ENCODE measurements at regions of chr3 and their contacts with region 1.

Region 1: GRCh38 chr3:52231502-52232293 is 6.3 kb upstream of the TLR9 start:
- DNase-seq: peak; percentile 89
- ATAC-seq: peak; percentile 88
- H3K4me3 Mint-ChIP-seq: peak overlapping the region; percentile 38
- H3K27ac Mint-ChIP-seq: peak overlapping the region; percentile 77
- H3K4me1 Mint-ChIP-seq: peaks cover 62% of the 10 kb centered on the region
- H3K27me3 Mint-ChIP-seq: no peaks in the 10 kb centered on the region

Region 2: DNA sequence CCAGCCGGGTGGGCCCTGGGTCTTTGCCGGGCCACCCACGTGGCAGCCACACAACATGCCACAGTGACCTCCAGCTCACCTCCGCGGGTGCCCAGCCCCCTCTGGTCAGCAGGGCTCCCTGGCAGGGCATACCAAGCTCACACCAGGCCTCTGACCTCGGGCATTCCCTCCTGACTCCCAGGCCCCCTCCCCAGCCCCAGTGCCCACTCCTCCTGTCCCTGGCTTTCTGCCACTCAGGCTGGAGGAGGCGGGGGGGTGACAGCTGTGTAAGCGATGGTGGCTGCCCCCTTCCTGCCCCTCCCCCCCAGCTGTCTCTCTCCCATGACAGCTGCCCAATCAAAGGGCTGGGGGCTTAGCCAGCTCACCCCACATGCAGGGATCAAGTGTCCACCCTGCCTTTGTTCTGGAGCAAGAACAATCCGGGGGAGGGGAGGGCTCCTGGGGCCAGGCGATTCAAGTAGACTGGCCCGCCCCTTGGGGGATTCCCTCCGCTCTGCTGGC is 267.7 kb before region 1 on chr3:
- CTCF ChIA-PET with region 1: no interaction called
- POLR2A ChIA-PET with region 1: no interaction called
- DNase-seq: no peak
- ATAC-seq: no peak
- H3K4me3 Mint-ChIP-seq: no peak overlapping the region
- H3K27ac Mint-ChIP-seq: no peak overlapping the region
- H3K4me1 Mint-ChIP-seq: peaks cover 12% of the 10 kb centered on the region
- H3K27me3 Mint-ChIP-seq: peaks cover 12% of the 10 kb centered on the region

Region 3: DNA sequence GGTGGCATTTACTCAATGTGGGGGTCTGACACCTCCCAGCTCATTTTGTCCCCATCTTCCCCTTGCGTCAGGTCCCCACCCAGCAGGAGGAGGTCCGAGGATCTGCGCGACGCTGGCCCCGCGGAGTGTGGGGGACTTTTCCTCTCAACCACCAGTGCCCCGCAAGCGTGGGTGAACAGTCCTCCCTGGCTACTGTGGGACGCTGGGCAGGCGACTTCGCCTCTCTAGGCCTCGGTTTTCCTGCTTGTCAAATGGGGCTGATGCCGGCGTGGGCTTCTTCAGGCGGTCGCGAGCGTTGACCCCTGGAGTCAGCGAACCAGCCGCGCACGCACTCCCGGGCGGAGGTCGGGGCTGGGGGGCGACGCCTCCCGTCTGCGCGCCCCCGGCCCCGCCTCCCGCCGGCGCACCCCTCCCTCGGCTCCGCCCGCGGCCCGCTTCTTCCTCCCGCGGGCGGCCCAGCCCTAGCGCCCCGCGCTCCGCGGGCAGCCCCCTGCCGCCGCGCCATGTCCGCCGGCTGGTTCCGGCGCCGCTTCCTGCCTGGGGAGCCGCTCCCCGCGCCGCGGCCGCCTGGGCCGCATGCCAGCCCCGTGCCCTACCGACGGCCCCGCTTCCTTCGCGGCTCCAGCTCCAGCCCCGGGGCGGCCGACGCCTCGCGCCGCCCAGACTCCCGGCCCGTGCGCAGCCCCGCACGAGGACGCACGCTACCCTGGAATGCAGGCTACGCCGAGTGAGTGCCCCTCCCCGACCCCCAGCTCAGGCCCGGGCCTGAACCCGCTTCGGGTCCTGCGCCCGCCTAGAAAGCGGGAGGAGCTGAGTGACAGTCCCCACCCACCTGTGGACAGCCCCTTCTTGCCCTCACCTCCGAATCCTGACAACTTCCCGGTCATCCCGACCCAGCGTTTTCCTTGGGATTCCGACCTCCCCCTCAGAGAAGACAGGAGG is 13.9 kb after region 1 on chr3 and contains the start of gene PPM1M:
- CTCF ChIA-PET with region 1: interaction called, 51 read pairs
- POLR2A ChIA-PET with region 1: interaction called, 9 read pairs
- DNase-seq: peak; percentile 68
- ATAC-seq: peak; percentile 63
- H3K4me3 Mint-ChIP-seq: peak within 1 kb of the TSS; percentile 92
- H3K27ac Mint-ChIP-seq: peak within 1 kb of the TSS; percentile 87
- H3K4me1 Mint-ChIP-seq: peaks cover 83% of the 10 kb centered on the region
- H3K27me3 Mint-ChIP-seq: no peaks in the 10 kb centered on the region
- total RNA-seq, gene PPM1M: 90.7 to 91.9 TPM

Region 4: GRCh38 chr3:52253314-52254304 is 21.9 kb after region 1 on chr3:
- CTCF ChIA-PET with region 1: interaction called, 51 read pairs
- POLR2A ChIA-PET with region 1: interaction called, 9 read pairs
- DNase-seq: peak; percentile 90
- ATAC-seq: peak; percentile 88
- H3K4me3 Mint-ChIP-seq: peak overlapping the region; percentile 77
- H3K27ac Mint-ChIP-seq: peak overlapping the region; percentile 99
- H3K4me1 Mint-ChIP-seq: peaks cover 95% of the 10 kb centered on the region
- H3K27me3 Mint-ChIP-seq: no peaks in the 10 kb centered on the region

Region 5: GRCh38 chr3:52270252-52270754 is 38.6 kb after region 1 on chr3:
- CTCF ChIA-PET with region 1: interaction called, 74 read pairs
- POLR2A ChIA-PET with region 1: interaction called, 400 read pairs
- DNase-seq: no peak
- ATAC-seq: no peak
- H3K4me3 Mint-ChIP-seq: peak overlapping the region; percentile 84
- H3K27ac Mint-ChIP-seq: peak overlapping the region; percentile 96
- H3K4me1 Mint-ChIP-seq: peaks cover 84% of the 10 kb centered on the region
- H3K27me3 Mint-ChIP-seq: no peaks in the 10 kb centered on the region

Region 6: DNA sequence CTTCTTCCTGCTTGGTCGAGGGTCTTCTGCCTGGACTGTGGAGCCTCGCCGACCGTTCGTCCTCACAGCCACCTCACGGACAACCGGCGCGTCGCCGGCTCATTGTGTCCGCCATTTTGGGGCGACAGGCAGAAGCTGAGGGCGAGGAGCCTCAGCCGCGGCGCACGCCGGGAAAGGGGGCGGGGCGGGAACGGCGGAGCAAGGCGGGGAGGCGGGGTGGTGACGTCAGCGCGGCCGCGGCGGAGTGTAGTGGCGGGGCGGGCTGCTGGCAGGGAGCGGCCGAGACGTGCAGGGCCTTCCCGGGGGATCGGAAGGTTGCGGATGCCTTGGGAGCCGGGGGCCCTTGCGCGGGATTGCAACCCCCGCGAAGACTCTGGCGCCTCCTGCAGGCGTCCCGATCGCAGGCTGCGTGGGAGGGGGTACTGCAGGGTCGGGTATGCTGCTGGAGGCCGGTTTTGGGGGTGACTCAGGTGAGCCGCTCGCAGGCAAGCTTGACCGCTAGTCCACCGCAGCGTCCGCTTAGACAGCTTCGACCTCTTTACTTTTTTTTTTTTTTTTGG is 46.9 kb after region 1 on chr3 and contains the start of gene WDR82:
- CTCF ChIA-PET with region 1: interaction called, 143 read pairs
- POLR2A ChIA-PET with region 1: interaction called, 400 read pairs
- DNase-seq: peak; percentile 98
- ATAC-seq: peak; percentile 79
- H3K4me3 Mint-ChIP-seq: peak within 1 kb of the TSS; percentile 100
- H3K27ac Mint-ChIP-seq: peak within 1 kb of the TSS; percentile 99
- H3K4me1 Mint-ChIP-seq: peaks cover 56% of the 10 kb centered on the region
- H3K27me3 Mint-ChIP-seq: no peaks in the 10 kb centered on the region
- total RNA-seq, gene WDR82: 131 TPM

Region 7: GRCh38 chr3:52291508-52292181 is 59.9 kb after region 1 on chr3:
- CTCF ChIA-PET with region 1: interaction called, 25 read pairs
- POLR2A ChIA-PET with region 1: interaction called, 400 read pairs
- DNase-seq: peak; percentile 70
- ATAC-seq: peak; percentile 23
- H3K4me3 Mint-ChIP-seq: no peak overlapping the region
- H3K27ac Mint-ChIP-seq: peak overlapping the region; percentile 78
- H3K4me1 Mint-ChIP-seq: peaks cover 34% of the 10 kb centered on the region
- H3K27me3 Mint-ChIP-seq: no peaks in the 10 kb centered on the region

Region 8: GRCh38 chr3:52406231-52406661 is 174.5 kb after region 1 on chr3:
- CTCF ChIA-PET with region 1: no interaction called
- POLR2A ChIA-PET with region 1: no interaction called
- DNase-seq: no peak
- ATAC-seq: no peak
- H3K4me3 Mint-ChIP-seq: no peak overlapping the region
- H3K27ac Mint-ChIP-seq: peak overlapping the region; percentile 44
- H3K4me1 Mint-ChIP-seq: peaks cover 24% of the 10 kb centered on the region
- H3K27me3 Mint-ChIP-seq: no peaks in the 10 kb centered on the region

Measured in activated CD8-positive, alpha-beta T cell treated with anti-CD3 and anti-CD28 coated beads, Interleukin-2, amount 10 ng/mL, durations not matched to agents 7 days and 5 days (primary cell).